ENCODE measurements at regions of chr19 and their contacts with region 1.

Region 1: DNA sequence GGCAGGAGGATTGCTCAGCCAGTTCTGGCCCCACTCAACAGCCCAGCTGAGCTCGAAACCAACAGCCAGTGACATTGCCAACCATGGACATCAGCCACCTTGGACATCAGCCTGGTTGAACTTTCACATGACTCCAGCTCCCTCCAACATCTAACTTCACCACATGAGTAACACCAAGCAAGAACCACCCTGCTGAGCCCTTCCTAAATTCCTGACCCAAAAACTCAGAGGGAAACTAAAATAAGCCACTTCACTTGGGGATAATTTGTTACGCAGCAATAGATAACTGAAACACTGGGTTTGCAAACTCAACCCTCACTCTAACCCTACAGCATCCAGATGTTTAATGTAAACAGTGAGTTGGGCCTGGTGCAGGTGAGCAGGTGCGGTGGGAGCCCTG is 10.7 kb upstream of the LRFN3 start:
- DNase-seq: no peak
- H3K4me3 ChIP-seq: no peak overlapping the region
- H3K4me3 Mint-ChIP-seq: no peak overlapping the region
- H3K27ac ChIP-seq: no peak overlapping the region
- H3K27ac Mint-ChIP-seq: peak overlapping the region in 2 of 7 donors; percentile 55 to 74
- H3K4me1 ChIP-seq: peaks cover 37 to 41% of the 10 kb centered on the region in 2 donors
- H3K4me1 Mint-ChIP-seq: peaks cover 39% of the 10 kb centered on the region
- H3K27me3 ChIP-seq: no peaks in the 10 kb centered on the region
- H3K27me3 Mint-ChIP-seq: peaks cover 0 to 2% (median 0%) of the 10 kb centered on the region in 3 donors
- CTCF ChIP-seq: no peak

Region 2: DNA sequence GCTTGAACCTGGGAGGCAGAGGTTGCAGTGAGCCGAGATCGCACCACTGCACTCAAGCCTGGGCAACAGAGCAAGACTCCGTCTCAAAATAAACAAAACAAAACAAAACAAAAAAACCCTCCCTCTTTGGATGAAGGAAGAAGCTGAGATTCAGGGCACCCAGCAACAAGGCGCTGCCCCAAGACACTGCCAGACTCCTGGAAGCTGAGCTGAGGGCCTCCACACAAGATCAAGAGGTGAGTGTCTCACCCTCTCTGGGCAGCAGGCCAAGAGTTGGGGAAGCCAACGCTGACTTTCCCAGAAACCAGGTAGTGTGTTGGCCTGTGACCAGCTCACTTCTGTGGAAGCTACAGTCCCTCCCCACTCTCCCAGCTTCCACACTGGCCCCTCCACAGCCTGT is 13.7 kb before region 1 on chr19:
- intact Hi-C with region 1: loop called in 1 of 2 experiments (anchors 2 kb)
- DNase-seq: peak in 2 of 3 donors; percentile 26 to 53
- H3K4me3 ChIP-seq: no peak overlapping the region
- H3K4me3 Mint-ChIP-seq: no peak overlapping the region
- H3K27ac ChIP-seq: peak overlapping the region; percentile 59 to 73
- H3K27ac Mint-ChIP-seq: peak overlapping the region; percentile 55 to 98 (median 90)
- H3K4me1 ChIP-seq: peaks cover 77 to 96% of the 10 kb centered on the region in 2 donors
- H3K4me1 Mint-ChIP-seq: peaks cover 72% of the 10 kb centered on the region
- H3K27me3 ChIP-seq: no peaks in the 10 kb centered on the region
- H3K27me3 Mint-ChIP-seq: peaks cover 0 to 5% (median 0%) of the 10 kb centered on the region in 3 donors
- CTCF ChIP-seq: no peak

Measured in CD14-positive monocyte (primary cell).